HEK293T (cell line): ENCODE measurements at regions of chr4 and their contacts with region 1.

Region 1: DNA sequence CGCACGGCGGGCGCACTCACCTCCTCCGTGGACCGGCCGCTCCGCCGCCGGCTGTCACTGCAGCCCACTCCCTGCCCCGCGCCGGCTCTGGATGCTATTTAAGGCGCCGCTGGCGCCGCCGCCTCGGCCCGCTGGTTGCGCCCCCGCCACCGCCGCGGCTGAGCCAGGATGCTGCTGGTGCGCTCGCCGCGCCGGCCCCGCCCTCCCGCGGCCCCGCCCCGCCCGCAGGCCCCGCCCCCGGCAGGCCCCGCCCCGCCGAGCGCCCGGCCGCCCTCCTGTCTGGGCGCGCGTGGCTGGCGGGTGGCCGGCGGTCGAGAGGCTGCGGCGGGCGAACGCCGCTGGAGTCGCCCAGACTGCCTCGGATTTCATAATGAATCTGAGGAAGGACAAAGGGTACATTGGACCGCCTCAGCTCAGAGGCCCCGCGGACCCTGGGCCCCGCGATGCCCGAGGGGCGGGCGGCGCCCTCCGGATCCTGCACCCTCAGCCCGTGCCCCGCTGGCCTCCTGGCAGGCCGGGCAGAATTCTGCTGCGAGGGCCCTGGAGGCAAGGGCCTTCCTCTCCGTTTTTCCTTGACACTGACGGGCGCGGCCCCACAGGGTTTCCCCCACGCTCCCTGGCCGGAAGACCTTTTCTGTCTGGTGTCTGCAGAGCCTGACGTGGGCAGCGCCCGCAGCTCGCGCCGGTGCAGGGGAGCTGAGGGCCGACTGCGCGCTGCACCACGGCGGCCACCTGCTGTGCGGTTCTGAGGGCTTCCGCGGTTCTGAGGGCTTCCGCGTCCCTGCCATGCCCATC is at the start of gene ACSL1:
- DNase-seq: peak; percentile 87

Region 2: GRCh38 chr4:184815046-184815877 is 10.8 kb before region 1 on chr4:
- CTCF ChIA-PET with region 1: interaction called, 3 read pairs
- POLR2A ChIA-PET with region 1: interaction called, 16 read pairs
- DNase-seq: peak; percentile 36